B cell (primary cell): ENCODE measurements at regions of chr1 and their contacts with region 1.

Region 1: DNA sequence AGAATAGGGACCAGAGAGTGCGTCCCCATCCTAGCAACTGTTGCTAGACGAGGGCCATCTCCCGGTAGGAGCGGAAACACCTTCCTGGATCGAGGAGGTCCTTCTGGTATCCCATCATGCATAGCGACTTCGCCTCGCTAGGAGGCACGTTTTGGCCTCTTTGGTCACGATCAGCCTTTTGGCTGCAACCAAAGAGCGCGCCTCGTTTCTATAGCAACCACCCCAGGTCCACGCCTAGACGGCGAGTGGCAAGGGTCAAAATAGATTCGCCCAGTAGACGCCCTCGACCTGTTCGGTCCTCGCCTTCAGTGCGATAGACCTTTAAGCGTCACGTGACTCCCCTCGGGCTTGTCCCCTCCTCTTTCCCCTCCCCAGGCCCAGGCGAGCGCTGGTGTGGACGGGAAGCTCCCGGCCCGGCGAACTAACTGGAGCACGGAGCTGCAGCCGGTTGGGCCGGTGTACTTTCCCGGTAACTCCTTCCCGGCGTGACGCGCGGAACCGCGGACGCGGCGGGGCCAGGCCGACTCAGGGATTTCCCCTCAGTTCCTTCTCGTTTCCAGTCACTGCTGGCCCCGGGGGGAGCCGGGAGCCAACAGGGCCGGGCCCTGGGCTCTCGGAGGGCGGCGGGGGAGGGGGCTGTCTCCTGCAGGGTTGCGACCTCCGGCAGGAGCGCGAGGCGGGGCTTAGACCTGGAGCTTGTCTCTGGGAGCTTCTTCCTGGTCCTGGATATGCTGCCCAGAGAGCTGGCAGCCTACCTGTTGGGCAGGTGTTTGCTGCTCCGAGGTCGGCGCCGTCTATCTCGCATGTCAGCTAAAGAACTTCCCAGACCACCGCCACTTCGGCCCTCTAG is at the start of gene DNAJC16:
- DNase-seq: peak; percentile 99
- ATAC-seq: peak; percentile 35
- H3K4me3 ChIP-seq: peak within 1 kb of the TSS; percentile 81 to 95 (median 86)
- H3K4me3 Mint-ChIP-seq: peak within 1 kb of the TSS; percentile 89
- H3K27ac ChIP-seq: peak within 1 kb of the TSS; percentile 99
- H3K27ac Mint-ChIP-seq: peak within 1 kb of the TSS; percentile 99
- H3K4me1 ChIP-seq: peaks cover 28 to 34% of the 10 kb centered on the region in 2 donors
- H3K4me1 Mint-ChIP-seq: peaks cover 59% of the 10 kb centered on the region
- H3K27me3 ChIP-seq: no peaks in the 10 kb centered on the region
- H3K27me3 Mint-ChIP-seq: no peaks in the 10 kb centered on the region
- CTCF ChIP-seq: no peak
- total RNA-seq, gene DNAJC16: 41.2 and 47.1 TPM in 2 replicates

Region 2: DNA sequence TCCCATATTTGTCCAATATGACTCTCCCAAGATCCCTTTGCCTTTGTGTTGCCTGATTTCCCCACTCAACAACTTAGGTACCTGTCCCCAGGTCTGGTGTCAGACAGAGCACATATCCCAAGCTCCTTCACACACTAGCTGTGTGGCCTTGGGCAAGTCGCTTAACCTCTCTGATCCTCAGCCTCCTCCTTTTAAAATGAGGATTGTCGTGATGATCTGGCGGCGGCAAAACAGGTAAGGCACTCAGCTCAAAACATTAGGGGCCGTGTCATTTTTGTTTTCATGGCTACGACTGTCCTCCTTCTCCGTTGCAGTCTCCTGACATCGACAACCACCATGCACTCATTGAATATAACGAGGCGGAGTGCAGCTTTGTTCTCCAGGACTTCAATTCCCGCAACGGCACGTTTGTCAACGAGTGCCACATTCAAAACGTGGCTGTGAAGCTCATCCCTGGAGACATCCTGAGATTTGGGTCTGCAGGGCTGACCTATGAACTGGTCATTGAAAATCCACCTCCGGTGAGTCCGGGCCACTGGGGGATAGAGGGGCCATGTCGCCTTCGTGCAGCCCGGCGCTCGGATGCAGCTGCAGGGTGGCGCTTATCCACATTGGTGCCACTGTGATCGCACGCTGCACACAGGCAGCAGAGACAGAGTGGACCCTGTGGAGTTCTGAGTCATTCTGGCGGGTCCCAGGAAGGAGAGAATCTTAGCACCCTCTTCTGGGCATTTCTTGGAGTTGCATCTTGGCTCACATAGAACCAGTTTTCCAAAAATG is 254.5 kb before region 1 on chr1:
- CTCF ChIA-PET with region 1: no interaction called
- POLR2A ChIA-PET with region 1: no interaction called
- intact Hi-C with region 1: no loop called
- DNase-seq: no peak
- ATAC-seq: no peak
- H3K4me3 ChIP-seq: no peak overlapping the region
- H3K4me3 Mint-ChIP-seq: no peak overlapping the region
- H3K27ac ChIP-seq: no peak overlapping the region
- H3K27ac Mint-ChIP-seq: no peak overlapping the region
- H3K4me1 ChIP-seq: no peaks in the 10 kb centered on the region
- H3K4me1 Mint-ChIP-seq: no peaks in the 10 kb centered on the region
- H3K27me3 ChIP-seq: peaks cover 0 to 21% (median 3%) of the 10 kb centered on the region in 4 experiments
- H3K27me3 Mint-ChIP-seq: peaks cover 36% of the 10 kb centered on the region
- CTCF ChIP-seq: peak; percentile 26

Region 3: GRCh38 chr1:15571266-15571665 is 44.6 kb after region 1 on chr1:
- CTCF ChIA-PET with region 1: interaction called, 4 read pairs
- POLR2A ChIA-PET with region 1: interaction called, 3 read pairs
- intact Hi-C with region 1: loop called (anchors 2 kb)
- DNase-seq: no peak
- ATAC-seq: no peak
- H3K4me3 ChIP-seq: peak overlapping the region in 2 of 5 experiments; percentile 15 to 16
- H3K4me3 Mint-ChIP-seq: peak overlapping the region; percentile 83
- H3K27ac ChIP-seq: peak overlapping the region; percentile 58 to 66
- H3K27ac Mint-ChIP-seq: peak overlapping the region; percentile 95
- H3K4me1 ChIP-seq: peaks cover 22 to 27% of the 10 kb centered on the region in 2 donors
- H3K4me1 Mint-ChIP-seq: peaks cover 26% of the 10 kb centered on the region
- H3K27me3 ChIP-seq: no peaks in the 10 kb centered on the region
- H3K27me3 Mint-ChIP-seq: no peaks in the 10 kb centered on the region
- CTCF ChIP-seq: no peak

Region 4: DNA sequence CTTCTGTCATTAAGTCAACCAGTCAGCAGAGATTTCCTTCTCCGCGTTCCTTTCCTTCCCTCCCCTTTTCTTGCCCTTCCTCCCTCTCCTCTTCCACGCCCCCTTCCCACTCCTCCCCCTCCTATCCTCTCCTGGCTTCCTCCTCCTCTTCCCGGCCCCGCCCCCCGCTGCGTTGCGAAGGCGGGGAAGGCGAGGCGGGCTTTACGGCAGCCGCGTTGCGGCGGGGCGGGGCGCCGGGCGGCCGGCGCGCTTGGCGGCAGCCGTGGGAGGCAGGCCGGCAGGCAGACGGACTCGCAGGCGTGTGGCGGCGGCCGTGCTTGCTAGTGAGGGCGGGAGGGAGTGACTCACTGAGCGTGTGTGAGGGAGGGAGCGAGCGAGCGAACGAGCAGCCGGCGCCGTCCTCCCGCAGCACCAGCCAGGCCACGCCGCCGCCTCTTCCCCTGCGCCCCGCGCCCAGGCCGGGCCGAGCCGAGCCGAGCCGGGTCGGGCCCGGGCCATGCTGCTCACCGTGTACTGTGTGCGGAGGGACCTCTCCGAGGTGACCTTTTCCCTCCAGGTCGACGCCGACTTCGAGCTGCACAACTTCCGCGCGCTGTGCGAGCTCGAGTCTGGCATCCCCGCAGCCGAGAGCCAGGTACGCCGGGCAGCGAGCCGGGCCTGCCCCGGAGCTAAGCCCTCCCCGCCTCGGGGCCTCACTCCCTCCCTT is 90.6 kb after region 1 on chr1 and contains the start of gene DDI2:
- CTCF ChIA-PET with region 1: interaction called, 3 read pairs
- POLR2A ChIA-PET with region 1: interaction called, 6 read pairs
- intact Hi-C with region 1: loop called (anchors 1 kb)
- DNase-seq: peak; percentile 94
- ATAC-seq: peak; percentile 88
- H3K4me3 ChIP-seq: peak within 1 kb of the TSS; percentile 82 to 98 (median 90)
- H3K4me3 Mint-ChIP-seq: peak within 1 kb of the TSS; percentile 91
- H3K27ac ChIP-seq: peak within 1 kb of the TSS; percentile 88 to 92
- H3K27ac Mint-ChIP-seq: peak within 1 kb of the TSS; percentile 88
- H3K4me1 ChIP-seq: peaks cover 26 to 32% of the 10 kb centered on the region in 2 donors
- H3K4me1 Mint-ChIP-seq: peaks cover 35% of the 10 kb centered on the region
- H3K27me3 ChIP-seq: no peaks in the 10 kb centered on the region
- H3K27me3 Mint-ChIP-seq: no peaks in the 10 kb centered on the region
- CTCF ChIP-seq: no peak
- total RNA-seq, gene DDI2: 61.0 and 68.3 TPM in 2 replicates

Region 5: GRCh38 chr1:15696956-15697521 is 170.3 kb after region 1 on chr1:
- CTCF ChIA-PET with region 1: interaction called, 4 read pairs
- POLR2A ChIA-PET with region 1: no interaction called
- intact Hi-C with region 1: loop called (anchors 1 kb)
- DNase-seq: peak; percentile 92
- ATAC-seq: peak; percentile 95
- H3K4me3 ChIP-seq: peak overlapping the region; percentile 17 to 64 (median 54)
- H3K4me3 Mint-ChIP-seq: peak overlapping the region; percentile 85
- H3K27ac ChIP-seq: peak overlapping the region; percentile 68 to 88
- H3K27ac Mint-ChIP-seq: peak overlapping the region; percentile 95
- H3K4me1 ChIP-seq: peaks cover 41 to 54% of the 10 kb centered on the region in 2 donors
- H3K4me1 Mint-ChIP-seq: peaks cover 64% of the 10 kb centered on the region
- H3K27me3 ChIP-seq: no peaks in the 10 kb centered on the region
- H3K27me3 Mint-ChIP-seq: no peaks in the 10 kb centered on the region
- CTCF ChIP-seq: no peak

Region 6: GRCh38 chr1:16067127-16067768 is 540.5 kb after region 1 on chr1:
- CTCF ChIA-PET with region 1: no interaction called
- POLR2A ChIA-PET with region 1: no interaction called
- intact Hi-C with region 1: no loop called
- DNase-seq: no peak
- ATAC-seq: no peak
- H3K4me3 ChIP-seq: no peak overlapping the region
- H3K4me3 Mint-ChIP-seq: no peak overlapping the region
- H3K27ac ChIP-seq: no peak overlapping the region
- H3K27ac Mint-ChIP-seq: no peak overlapping the region
- H3K4me1 ChIP-seq: no peaks in the 10 kb centered on the region
- H3K4me1 Mint-ChIP-seq: peaks cover 2% of the 10 kb centered on the region
- H3K27me3 ChIP-seq: peaks cover 0 to 14% (median 2%) of the 10 kb centered on the region in 4 experiments
- H3K27me3 Mint-ChIP-seq: peaks cover 34% of the 10 kb centered on the region
- CTCF ChIP-seq: no peak

Region 7: GRCh38 chr1:16236511-16237342 is 710.0 kb after region 1 on chr1 and contains the start of gene CPLANE2:
- CTCF ChIA-PET with region 1: no interaction called
- POLR2A ChIA-PET with region 1: no interaction called
- intact Hi-C with region 1: loop called (anchors 10 kb)
- DNase-seq: peak; percentile 97
- ATAC-seq: peak; percentile 79
- H3K4me3 ChIP-seq: peak within 1 kb of the TSS; percentile 55 to 98 (median 76)
- H3K4me3 Mint-ChIP-seq: peak within 1 kb of the TSS; percentile 85
- H3K27ac ChIP-seq: peak within 1 kb of the TSS; percentile 82 to 92
- H3K27ac Mint-ChIP-seq: peak within 1 kb of the TSS; percentile 96
- H3K4me1 ChIP-seq: peaks cover 12 to 17% of the 10 kb centered on the region in 2 donors
- H3K4me1 Mint-ChIP-seq: peaks cover 16% of the 10 kb centered on the region
- H3K27me3 ChIP-seq: no peaks in the 10 kb centered on the region
- H3K27me3 Mint-ChIP-seq: no peaks in the 10 kb centered on the region
- CTCF ChIP-seq: no peak
- total RNA-seq, gene CPLANE2: 11.1 and 14.3 TPM in 2 replicates

Region 8: GRCh38 chr1:16644193-16644481 is 1117.4 kb after region 1 on chr1:
- CTCF ChIA-PET with region 1: no interaction called
- POLR2A ChIA-PET with region 1: no interaction called
- intact Hi-C with region 1: loop called (anchors 10 kb)
- DNase-seq: no peak
- ATAC-seq: no peak
- H3K4me3 ChIP-seq: peak overlapping the region; percentile 69 to 90 (median 78)
- H3K4me3 Mint-ChIP-seq: no peak overlapping the region
- H3K27ac ChIP-seq: peak overlapping the region; percentile 82 to 86
- H3K27ac Mint-ChIP-seq: no peak overlapping the region
- H3K4me1 ChIP-seq: peaks cover 29 to 44% of the 10 kb centered on the region in 2 donors
- H3K4me1 Mint-ChIP-seq: peaks cover 10% of the 10 kb centered on the region
- H3K27me3 ChIP-seq: peaks cover 0 to 9% (median 0%) of the 10 kb centered on the region in 4 experiments
- H3K27me3 Mint-ChIP-seq: no peaks in the 10 kb centered on the region
- CTCF ChIP-seq: no peak